Activated CD4-positive, alpha-beta memory T cell treated with anti-CD3 and anti-CD28 coated beads for 36 hours (primary cell): ENCODE measurements at regions of chr20 and their contacts with region 1.

Region 1: GRCh38 chr20:46307139-46307998 is 929 bp downstream of the CDH22 start:
- DNase-seq: peak; percentile 78
- H3K4me3 Mint-ChIP-seq: no peak overlapping the region
- H3K27ac Mint-ChIP-seq: no peak overlapping the region
- H3K4me1 Mint-ChIP-seq: peaks cover 6% of the 10 kb centered on the region
- H3K27me3 Mint-ChIP-seq: peaks cover 50% of the 10 kb centered on the region

Region 2: DNA sequence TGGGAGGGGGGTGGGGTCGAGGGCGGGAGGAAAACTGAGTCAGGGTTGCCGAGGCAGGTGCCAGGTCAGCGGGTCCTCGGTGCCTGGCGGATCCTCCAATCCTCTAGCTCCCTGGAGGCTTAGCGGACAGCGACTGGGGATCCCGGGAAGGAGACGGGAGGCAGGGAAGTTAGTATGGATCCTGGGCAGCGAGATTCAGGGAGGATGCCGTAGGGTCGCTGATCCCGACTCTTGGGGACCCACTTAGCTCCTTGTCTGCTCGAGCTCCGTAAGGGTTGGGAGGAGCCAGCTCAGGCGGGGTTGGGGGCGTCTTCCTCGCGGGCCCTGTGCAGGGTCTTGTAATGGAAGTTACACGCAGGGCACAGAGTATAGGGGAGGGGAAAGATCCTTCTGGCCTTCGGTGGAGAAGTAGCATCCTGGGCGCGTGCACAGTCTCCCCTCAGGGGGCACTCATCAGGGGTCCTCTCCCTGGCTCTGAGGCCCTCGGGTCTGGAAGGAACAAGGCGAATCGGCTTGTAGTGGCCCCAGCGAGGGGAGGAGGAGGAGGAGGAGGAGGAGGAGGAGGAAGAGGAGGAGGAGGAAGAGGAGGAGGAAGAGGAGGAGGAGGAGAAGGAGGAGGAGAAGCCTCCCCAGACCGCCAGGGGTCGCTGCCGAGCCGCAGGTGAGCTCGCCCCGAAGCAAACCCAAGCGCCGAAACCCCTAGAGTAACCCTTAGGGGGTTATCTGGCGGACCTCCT is 284.8 kb before region 1 on chr20:
- CTCF ChIA-PET with region 1: interaction called, 5 read pairs
- POLR2A ChIA-PET with region 1: no interaction called
- intact Hi-C with region 1: loop called (anchors 5 kb)
- DNase-seq: peak; percentile 80
- H3K4me3 Mint-ChIP-seq: peak overlapping the region; percentile 46
- H3K27ac Mint-ChIP-seq: no peak overlapping the region
- H3K4me1 Mint-ChIP-seq: peaks cover 13% of the 10 kb centered on the region
- H3K27me3 Mint-ChIP-seq: peaks cover 35% of the 10 kb centered on the region

Region 3: DNA sequence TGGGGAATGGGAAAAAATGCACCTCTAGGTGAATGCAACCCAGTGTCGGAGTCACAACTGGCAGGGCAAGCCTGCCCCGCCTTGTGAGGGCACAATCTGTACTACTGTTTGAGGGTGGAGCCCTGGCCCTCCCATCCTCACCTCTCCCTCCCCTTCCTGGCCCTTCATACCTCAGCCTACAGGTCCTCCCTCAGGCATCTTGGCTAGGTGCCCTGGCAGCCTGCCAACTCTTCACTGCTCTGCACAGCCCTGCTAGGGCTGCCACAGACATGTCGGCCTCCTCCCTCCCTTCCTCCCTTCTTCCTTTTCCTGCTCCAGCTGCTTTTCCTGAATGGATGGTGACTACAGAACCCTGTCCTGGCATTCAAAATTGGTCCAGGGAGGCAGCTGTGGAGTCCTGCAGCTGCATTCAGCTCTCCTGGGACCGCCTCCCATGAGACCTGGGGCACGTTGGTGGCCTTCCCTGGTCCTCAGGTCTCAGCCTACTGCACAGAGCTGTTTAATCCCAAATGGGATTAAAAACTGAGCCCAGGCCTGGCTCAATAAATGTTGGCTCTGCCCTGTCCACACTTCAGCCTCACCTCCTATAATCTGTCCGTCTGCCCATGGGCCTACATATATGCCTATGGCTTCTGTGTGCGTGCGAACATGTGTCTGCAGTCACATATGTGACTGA is 51.8 kb before region 1 on chr20:
- CTCF ChIA-PET with region 1: no interaction called
- POLR2A ChIA-PET with region 1: no interaction called
- intact Hi-C with region 1: no loop called
- DNase-seq: no peak
- H3K4me3 Mint-ChIP-seq: no peak overlapping the region
- H3K27ac Mint-ChIP-seq: no peak overlapping the region
- H3K4me1 Mint-ChIP-seq: no peaks in the 10 kb centered on the region
- H3K27me3 Mint-ChIP-seq: peaks cover 29% of the 10 kb centered on the region

Region 4: DNA sequence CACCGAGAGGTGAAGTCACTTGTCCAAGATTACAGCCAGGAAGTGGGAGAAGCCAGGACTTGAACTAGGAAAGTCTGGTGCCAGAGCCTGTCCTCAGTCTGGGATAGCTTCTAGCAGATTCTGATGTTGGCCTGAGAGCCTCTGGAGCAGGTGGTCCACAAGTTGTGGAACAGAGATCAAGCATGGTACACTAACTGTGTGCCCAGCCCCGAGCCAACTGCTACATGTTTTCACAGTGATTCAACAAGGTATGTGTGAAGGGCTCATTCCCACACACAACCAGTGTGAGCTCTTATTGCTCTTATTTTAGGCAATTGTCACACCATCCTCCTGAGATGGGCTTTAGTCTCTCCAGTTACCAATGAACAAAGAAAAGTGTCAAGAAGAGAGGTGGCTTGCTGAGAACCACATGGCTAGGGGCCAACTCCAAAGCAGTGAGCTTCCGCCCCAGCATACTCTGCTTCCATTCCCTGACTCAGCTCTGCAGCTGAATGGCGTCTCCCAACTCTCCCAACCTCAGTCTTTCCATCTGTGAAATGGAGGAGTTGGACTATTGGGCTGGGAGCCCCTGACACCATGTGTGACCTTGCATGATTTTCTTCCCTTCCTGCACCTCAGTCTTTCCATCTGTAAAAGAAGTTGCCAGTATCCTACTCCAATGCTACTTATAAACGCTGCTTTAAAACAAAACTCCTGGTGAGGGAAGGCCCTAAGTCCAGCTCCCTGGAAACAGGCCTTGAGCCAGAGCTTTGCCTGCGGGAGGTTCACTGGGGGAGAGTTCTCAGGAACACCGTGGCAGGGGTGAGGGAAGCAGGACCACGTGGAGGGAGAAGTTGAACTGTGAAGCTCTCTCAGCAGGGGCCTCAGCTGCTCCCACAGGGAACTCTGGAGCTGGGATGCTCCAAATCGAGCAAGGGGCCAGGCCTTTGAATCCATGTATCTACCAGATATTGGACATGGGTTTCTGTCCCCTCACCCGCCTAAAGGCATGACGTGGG is 40.0 kb before region 1 on chr20:
- CTCF ChIA-PET with region 1: no interaction called
- POLR2A ChIA-PET with region 1: no interaction called
- intact Hi-C with region 1: no loop called
- DNase-seq: no peak
- H3K4me3 Mint-ChIP-seq: no peak overlapping the region
- H3K27ac Mint-ChIP-seq: no peak overlapping the region
- H3K4me1 Mint-ChIP-seq: no peaks in the 10 kb centered on the region
- H3K27me3 Mint-ChIP-seq: peaks cover 33% of the 10 kb centered on the region

Region 5: DNA sequence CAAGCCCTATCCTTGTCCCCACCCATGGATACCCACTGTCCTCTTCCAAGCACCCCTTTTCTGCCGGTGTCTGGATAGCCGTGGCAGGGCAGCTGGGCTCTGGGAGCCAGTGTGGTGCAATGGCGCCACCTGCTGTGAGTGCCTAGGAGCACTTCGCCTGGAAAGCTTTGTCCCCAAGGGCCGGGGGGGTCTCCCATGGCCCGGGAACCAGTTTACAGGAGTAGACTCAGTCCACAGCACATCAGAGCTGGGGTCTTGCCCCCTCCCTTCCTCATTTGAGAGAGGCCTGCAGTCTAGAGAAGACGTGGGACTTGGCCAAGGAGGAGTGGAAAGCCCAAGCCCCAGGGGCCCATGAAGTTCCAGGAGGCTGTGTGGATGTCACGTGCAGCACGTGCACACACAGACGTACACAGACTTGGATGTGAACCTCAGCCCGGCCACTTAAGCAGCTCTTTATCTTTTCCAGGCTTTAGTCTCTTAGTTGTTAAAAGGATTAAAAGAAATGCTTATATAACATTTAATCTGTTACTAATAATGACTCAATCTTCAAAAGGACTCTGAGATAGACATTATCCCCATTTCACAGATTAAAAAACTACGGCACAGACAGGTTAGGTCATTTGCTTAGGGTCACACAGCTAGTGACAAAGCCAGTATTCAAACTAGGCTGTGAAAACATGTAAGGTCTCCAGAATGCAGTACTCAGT is 41.8 kb after region 1 on chr20:
- CTCF ChIA-PET with region 1: interaction called, 33 read pairs
- POLR2A ChIA-PET with region 1: no interaction called
- intact Hi-C with region 1: loop called (anchors 1 kb)
- DNase-seq: peak; percentile 65
- H3K4me3 Mint-ChIP-seq: no peak overlapping the region
- H3K27ac Mint-ChIP-seq: no peak overlapping the region
- H3K4me1 Mint-ChIP-seq: peaks cover 23% of the 10 kb centered on the region
- H3K27me3 Mint-ChIP-seq: no peaks in the 10 kb centered on the region

Region 6: DNA sequence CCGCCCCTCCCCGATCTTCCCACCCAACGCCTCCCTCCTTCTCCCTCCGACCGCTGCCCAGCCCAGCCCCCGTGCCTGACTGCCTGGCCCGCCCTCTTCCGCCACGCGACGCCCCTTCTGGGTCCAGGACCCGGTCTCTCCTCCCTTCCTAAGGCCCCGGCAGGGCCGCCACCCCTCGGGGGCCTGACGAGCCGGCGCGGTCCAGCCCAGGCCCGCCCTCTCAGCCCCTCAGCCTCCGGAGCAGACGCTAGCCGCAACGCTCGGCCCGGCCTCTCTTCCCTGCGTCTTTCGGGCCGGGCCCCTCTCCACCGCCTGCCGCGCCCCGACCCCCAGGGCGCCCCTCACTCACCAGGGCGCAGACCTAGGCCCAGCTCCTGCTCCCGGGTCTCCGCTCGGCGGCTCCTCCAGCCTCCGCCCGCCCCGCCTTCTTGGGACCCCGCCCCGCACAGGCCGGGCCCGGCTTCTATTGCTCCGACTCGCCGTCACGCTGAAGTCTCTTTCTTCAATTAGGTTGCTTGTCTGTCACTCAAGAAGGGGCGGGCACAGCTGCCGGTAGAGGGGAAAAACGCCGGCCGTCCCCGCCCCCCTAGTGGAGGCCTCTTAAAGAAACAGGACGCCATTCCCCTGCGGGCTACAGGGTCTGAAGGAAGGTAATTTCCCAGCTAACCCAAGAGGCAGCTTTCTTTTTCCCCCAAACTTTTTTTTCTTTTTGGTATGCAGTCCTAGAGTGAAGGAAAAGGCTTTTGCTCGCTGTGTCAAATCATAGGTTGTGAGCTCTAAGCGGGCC is 99.0 kb after region 1 on chr20 and contains the start of gene ELMO2:
- CTCF ChIA-PET with region 1: interaction called, 19 read pairs
- POLR2A ChIA-PET with region 1: no interaction called
- intact Hi-C with region 1: loop called (anchors 1 kb)
- DNase-seq: peak; percentile 98
- H3K4me3 Mint-ChIP-seq: peak within 1 kb of the TSS; percentile 90
- H3K27ac Mint-ChIP-seq: peak within 1 kb of the TSS; percentile 92
- H3K4me1 Mint-ChIP-seq: peaks cover 63% of the 10 kb centered on the region
- H3K27me3 Mint-ChIP-seq: no peaks in the 10 kb centered on the region
- total RNA-seq, gene ELMO2: 57.4 to 64.1 TPM

Region 7: DNA sequence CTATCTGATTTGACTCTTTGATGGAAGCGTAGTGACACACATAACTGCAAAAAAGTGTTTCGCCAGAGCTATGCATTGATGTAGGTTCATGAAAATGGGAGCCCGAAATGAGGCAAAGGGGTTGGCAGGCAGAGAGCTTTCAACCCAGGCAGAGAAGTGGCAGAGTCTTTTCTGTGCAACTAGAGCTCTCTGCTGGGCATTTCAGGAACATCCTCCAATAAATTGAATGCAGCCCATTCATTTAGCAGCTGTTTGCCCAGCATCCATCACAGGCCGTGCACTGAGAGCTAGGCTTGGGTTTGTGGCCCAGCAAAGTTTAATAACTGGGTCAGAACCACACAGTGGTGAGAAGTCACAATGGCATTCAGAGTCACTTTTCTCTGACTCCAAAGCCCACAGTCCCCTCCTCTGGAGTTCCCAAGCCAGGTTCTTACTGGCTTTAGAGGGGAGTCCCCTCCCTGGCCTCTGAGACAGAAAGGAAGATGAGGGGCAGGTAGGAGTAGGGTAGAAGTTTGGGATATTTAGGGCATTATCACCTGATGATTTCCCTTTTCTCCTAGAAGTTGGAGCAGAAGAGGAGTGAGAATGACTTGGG is 130.9 kb after region 1 on chr20:
- CTCF ChIA-PET with region 1: interaction called, 17 read pairs
- POLR2A ChIA-PET with region 1: no interaction called
- intact Hi-C with region 1: no loop called
- DNase-seq: no peak
- H3K4me3 Mint-ChIP-seq: no peak overlapping the region
- H3K27ac Mint-ChIP-seq: no peak overlapping the region
- H3K4me1 Mint-ChIP-seq: no peaks in the 10 kb centered on the region
- H3K27me3 Mint-ChIP-seq: peaks cover 14% of the 10 kb centered on the region